ENCODE measurements at regions of chr9 and their contacts with region 1.

Region 1: GRCh38 chr9:131590908-131591844 is 45.9 kb downstream of the PRRT1B start:
- DNase-seq: peak; percentile 77 to 80
- ATAC-seq: peak; percentile 90 to 96
- H3K4me3 ChIP-seq: no peak overlapping the region
- H3K27ac ChIP-seq: no peak overlapping the region
- H3K4me1 ChIP-seq: peaks cover 22% of the 10 kb centered on the region
- CTCF ChIP-seq: peak; percentile 91
- EP300 ChIP-seq: no peak
- POLR2A ChIP-seq: no peak
- RAD21 ChIP-seq: peak; percentile 98 to 99

Region 2: DNA sequence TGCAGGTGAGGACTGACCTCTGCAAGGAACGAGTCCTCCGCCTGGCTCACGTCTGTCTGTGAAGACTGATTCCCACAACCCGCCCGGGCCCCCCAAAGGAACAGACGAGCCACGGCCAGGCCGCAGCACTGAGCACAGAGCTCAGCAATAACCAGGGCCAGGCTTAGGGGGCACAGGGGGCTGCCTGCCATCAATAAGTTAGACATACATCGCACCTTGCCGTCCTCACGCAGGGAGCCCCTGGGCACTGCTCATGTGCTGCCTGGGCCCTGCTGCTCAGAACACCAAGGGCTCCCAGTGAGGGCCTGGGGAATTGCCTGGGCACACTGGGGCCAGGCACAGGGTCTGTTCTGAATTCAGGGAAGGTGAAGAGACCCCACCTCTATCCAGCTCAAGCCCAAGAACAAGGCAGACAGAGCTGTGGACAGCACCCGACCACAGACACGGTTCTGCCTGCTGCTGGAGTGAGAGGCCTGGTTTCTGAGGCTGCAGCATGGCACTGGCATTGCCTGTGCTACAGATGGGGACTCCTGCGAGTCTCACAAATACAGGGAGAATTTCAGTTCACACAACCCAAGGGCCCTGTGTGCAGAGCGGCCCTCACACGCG is 14.1 kb before region 1 on chr9:
- CTCF ChIA-PET with region 1: interaction called, 10 read pairs
- POLR2A ChIA-PET with region 1: no interaction called
- DNase-seq: no peak
- ATAC-seq: no peak
- H3K4me3 ChIP-seq: no peak overlapping the region
- H3K27ac ChIP-seq: no peak overlapping the region
- H3K4me1 ChIP-seq: no peaks in the 10 kb centered on the region
- CTCF ChIP-seq: no peak
- EP300 ChIP-seq: no peak
- POLR2A ChIP-seq: no peak
- RAD21 ChIP-seq: no peak

Region 3: GRCh38 chr9:131608493-131609037 is 17.4 kb after region 1 on chr9:
- CTCF ChIA-PET with region 1: interaction called, 60 read pairs
- POLR2A ChIA-PET with region 1: interaction called, 3 read pairs
- DNase-seq: peak; percentile 67 to 81
- ATAC-seq: peak; percentile 88 to 92
- H3K4me3 ChIP-seq: no peak overlapping the region
- H3K27ac ChIP-seq: peak overlapping the region; percentile 56 to 80; a peak in 5 of 6 replicates
- H3K4me1 ChIP-seq: peaks cover 43% of the 10 kb centered on the region
- CTCF ChIP-seq: no peak
- EP300 ChIP-seq: no peak
- POLR2A ChIP-seq: no peak
- RAD21 ChIP-seq: no peak

Region 4: GRCh38 chr9:131678499-131679111 is 87.4 kb after region 1 on chr9:
- CTCF ChIA-PET with region 1: interaction called, 18 read pairs
- POLR2A ChIA-PET with region 1: no interaction called
- DNase-seq: peak; percentile 67 to 92
- ATAC-seq: peak; percentile 94 to 96
- H3K4me3 ChIP-seq: no peak overlapping the region
- H3K27ac ChIP-seq: peak overlapping the region; percentile 57 to 67; a peak in 5 of 6 replicates
- H3K4me1 ChIP-seq: peaks cover 38% of the 10 kb centered on the region
- CTCF ChIP-seq: no peak
- EP300 ChIP-seq: no peak
- POLR2A ChIP-seq: no peak
- RAD21 ChIP-seq: no peak

Region 5: GRCh38 chr9:131728961-131729360 is 137.8 kb after region 1 on chr9:
- CTCF ChIA-PET with region 1: interaction called, 737 read pairs
- POLR2A ChIA-PET with region 1: interaction called, 3 read pairs
- DNase-seq: no peak
- ATAC-seq: no peak
- H3K4me3 ChIP-seq: no peak overlapping the region
- H3K27ac ChIP-seq: no peak overlapping the region; a peak in 1 of 6 replicates
- H3K4me1 ChIP-seq: peaks cover 57% of the 10 kb centered on the region
- CTCF ChIP-seq: no peak
- EP300 ChIP-seq: no peak
- POLR2A ChIP-seq: no peak
- RAD21 ChIP-seq: no peak

Measured in A549 (cell line).